ENCODE measurements at regions of chr6 and their contacts with region 1.

Region 1: GRCh38 chr6:9537381-9537780 is 877.5 kb downstream of the TFAP2A start:
- DNase-seq: no peak
- H3K4me3 Mint-ChIP-seq: no peak overlapping the region
- H3K27ac Mint-ChIP-seq: peak overlapping the region; percentile 83
- H3K4me1 Mint-ChIP-seq: peaks cover 10% of the 10 kb centered on the region
- H3K27me3 Mint-ChIP-seq: no peaks in the 10 kb centered on the region
- CTCF ChIP-seq: no peak

Region 2: DNA sequence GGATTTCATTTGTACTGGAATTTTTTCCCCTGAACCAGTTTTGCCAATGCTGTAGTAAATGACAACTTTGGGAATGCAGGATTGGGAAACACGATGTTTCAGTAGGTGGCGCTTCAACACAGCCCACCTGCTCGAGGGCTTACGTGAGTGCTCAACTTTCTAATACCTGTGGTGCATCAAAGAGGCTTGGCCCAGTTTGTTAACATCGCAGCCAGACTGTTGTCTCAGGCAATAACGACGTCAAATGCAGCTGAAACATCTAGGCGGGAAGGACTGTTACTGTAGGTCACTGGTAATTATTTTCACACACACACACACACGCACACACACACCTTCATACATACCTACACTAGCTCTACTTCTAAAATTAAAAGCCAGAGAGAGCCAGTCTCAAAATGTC is 286.5 kb before region 1 on chr6:
- CTCF ChIA-PET with region 1: no interaction called
- intact Hi-C with region 1: loop called (anchors 2 kb)
- DNase-seq: peak; percentile 55
- H3K4me3 Mint-ChIP-seq: no peak overlapping the region
- H3K27ac Mint-ChIP-seq: no peak overlapping the region
- H3K4me1 Mint-ChIP-seq: peaks cover 14% of the 10 kb centered on the region
- H3K27me3 Mint-ChIP-seq: no peaks in the 10 kb centered on the region
- CTCF ChIP-seq: peak; percentile 30

Region 3: DNA sequence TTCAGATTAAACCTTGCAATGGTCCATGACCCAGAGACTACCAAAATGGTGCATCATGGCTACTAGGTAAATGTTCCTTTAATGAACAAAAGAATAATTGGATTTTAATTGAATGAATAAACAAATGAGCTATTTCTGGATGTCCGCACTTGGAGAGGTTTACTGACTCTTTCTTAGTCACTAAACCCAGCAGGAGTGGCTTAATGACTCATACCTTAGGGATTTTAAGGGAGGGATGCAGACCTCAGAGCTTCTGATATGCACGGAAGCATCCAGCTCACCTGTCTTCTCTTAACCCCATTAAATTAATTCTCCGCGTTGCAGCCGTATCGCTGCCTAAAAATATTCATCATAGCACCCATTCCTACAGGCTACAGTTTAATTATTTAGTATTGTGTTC is 132.0 kb before region 1 on chr6:
- CTCF ChIA-PET with region 1: no interaction called
- intact Hi-C with region 1: loop called (anchors 5 kb)
- DNase-seq: peak; percentile 37
- H3K4me3 Mint-ChIP-seq: peak overlapping the region; percentile 48
- H3K27ac Mint-ChIP-seq: peak overlapping the region; percentile 89
- H3K4me1 Mint-ChIP-seq: peaks cover 36% of the 10 kb centered on the region
- H3K27me3 Mint-ChIP-seq: no peaks in the 10 kb centered on the region
- CTCF ChIP-seq: no peak

Region 4: DNA sequence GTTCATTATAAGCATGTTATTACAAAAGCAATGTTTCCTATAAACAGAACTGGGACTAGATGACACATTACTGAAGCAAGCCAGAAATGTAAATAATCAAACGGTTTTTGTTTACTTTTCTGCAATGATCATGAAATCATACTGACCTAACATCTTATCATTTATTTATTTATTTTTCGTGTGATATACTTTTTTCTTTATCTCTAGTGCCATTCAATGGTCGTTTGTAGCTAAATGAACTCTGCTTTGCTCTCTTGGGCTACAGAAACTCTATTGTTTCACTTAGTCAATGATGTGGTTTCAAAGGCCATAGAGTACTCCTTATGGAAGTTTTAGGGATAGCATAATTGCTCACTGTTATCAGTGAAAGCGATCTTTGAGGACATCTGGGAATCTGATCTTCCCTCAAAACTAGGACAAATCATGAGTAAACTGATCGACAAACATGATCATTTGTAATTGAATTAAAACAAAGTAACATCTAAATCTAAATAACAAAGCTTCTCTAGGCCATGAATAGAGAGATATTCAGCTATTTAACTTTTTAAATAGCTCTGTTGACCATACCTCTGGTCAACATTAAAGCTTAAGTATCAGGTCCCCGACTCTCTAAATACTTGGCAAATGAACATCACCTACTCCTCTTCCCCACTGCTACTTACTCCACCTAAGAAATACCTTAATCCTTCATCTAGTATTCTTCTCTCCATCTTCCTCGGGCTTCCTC is 55.9 kb before region 1 on chr6:
- CTCF ChIA-PET with region 1: no interaction called
- intact Hi-C with region 1: loop called (anchors 1 kb)
- DNase-seq: no peak
- H3K4me3 Mint-ChIP-seq: peak overlapping the region; percentile 42
- H3K27ac Mint-ChIP-seq: peak overlapping the region; percentile 92
- H3K4me1 Mint-ChIP-seq: peaks cover 13% of the 10 kb centered on the region
- H3K27me3 Mint-ChIP-seq: no peaks in the 10 kb centered on the region
- CTCF ChIP-seq: no peak

Region 5: DNA sequence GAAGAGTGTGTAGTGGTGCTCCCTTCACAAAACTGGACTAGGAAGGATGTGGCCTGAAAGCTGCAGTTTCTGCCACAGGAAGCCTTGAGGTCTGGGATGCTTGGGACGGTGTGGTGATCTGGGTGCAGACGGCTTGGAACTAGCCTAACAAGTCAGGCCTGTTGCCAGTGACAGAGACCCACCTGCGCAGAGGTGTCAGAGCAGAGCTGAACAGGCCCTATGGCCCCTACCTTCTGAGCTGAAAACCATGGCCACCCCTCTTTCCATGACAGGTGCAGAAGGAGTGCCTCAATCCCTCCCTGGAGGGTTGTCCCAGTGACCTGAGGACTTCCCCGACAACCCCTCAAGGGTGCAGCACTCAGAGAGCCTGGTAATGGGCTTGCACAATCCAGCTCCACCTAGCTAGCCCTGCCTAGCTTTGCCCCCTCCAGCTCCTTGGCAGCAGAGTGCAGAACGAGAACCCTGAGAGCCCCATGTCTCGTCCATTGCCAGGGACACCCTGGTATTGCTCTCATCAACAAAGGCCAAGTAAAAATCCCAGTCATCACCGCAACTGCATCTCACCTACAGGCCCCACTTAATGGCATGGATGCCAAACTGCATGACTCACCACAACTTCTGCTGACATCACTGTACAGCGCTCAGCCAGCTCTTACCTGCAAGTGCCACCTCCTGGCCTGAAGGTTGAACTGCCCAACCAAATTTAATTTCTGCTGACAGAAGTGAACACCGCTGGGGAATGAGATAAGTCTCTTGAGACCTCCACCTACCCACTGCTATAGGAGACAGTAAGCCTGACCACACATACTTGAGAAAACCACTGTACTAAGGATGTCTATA is 314.4 kb after region 1 on chr6:
- CTCF ChIA-PET with region 1: no interaction called
- intact Hi-C with region 1: loop called (anchors 10 kb)
- DNase-seq: peak; percentile 60
- H3K4me3 Mint-ChIP-seq: no peak overlapping the region
- H3K27ac Mint-ChIP-seq: no peak overlapping the region
- H3K4me1 Mint-ChIP-seq: no peaks in the 10 kb centered on the region
- H3K27me3 Mint-ChIP-seq: no peaks in the 10 kb centered on the region
- CTCF ChIP-seq: no peak

Region 6: DNA sequence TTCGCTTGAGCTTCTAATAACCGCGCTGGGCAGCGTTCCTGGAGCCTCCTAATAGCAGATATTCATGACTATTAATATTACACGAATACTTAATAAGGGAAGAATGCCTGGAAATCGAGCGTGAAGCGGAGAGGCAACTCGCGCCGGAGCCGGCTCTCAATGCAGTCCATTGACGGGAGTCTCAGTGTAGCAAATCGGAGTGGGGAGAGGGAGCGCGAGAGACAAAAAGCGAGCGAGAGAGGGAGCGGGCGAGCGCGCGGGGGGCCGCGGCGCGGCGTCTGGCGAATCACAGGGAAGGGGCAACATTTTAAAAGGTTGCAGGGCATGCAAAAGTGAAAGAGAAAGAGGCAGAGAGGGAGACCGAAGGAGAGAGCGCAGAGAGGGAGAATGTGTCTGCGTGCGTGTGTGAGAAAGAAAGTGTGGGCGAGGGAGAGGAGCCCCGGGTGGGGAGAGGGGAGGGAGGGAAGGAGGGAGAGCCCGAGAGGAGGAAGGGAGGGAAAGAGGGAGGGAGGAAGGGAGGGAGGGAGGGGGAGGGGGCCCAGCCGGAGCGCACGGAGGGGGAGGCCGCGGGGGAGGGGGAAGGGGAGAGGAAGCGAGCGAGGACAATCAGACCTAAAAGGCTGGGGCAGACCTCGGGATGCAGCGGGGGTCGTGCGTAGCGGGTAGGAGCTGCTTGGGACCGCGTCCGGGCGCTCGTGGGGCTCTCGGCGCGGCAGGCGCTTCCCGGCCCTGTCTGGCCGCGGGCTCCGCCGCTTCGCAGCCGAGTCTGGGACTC is 874.8 kb after region 1 on chr6:
- CTCF ChIA-PET with region 1: no interaction called
- intact Hi-C with region 1: loop called (anchors 5 kb)
- DNase-seq: peak; percentile 75
- H3K4me3 Mint-ChIP-seq: peak overlapping the region; percentile 92
- H3K27ac Mint-ChIP-seq: peak overlapping the region; percentile 99
- H3K4me1 Mint-ChIP-seq: peaks cover 1% of the 10 kb centered on the region
- H3K27me3 Mint-ChIP-seq: no peaks in the 10 kb centered on the region
- CTCF ChIP-seq: no peak

Measured in Calu3 (cell line).